ENCODE measurements at regions of chr21 and their contacts with region 1.

Region 1: DNA sequence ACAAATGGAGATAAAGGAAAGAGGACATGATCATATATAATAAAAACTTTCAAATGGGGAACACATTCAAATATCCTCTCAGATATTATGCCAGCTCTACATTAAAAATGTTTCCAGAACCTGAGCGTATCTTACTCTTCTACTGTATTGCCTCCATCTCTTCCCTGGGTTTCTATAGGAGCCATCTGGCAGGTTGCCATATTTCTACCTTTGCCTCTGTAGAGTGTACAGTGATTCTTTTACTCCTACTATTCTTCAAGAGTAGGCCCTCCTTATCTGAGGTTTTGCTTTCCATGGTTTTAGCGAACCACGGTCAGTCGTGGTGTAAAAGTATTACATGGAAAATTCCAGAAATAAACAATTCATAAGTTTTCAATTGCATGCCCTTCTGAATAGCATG is 259.5 kb downstream of the GRIK1 start:
- DNase-seq: no peak
- ATAC-seq: no peak
- H3K4me3 ChIP-seq: no peak overlapping the region
- H3K27ac ChIP-seq: no peak overlapping the region
- H3K4me1 ChIP-seq: no peaks in the 10 kb centered on the region
- H3K27me3 ChIP-seq: no peaks in the 10 kb centered on the region
- CTCF ChIP-seq: no peak

Region 2: DNA sequence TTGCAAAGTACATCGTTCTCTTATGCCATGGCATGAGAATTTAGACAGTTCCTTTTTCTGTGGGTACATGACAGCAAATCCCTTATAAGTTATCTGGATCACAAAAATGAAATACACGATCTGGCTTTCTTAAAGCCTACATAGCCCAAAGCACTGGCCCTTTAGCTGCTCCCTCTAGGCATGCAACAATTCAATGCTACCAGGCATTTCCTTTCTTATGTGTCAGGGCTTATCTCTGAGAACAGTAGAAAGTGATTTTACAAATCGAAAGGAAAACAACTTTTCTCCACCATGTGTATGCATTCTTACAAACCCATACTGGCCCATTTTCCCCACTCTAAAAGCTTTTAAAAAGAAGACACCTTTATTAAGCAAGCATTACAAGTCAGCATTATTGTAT is 119.8 kb after region 1 on chr21:
- intact Hi-C with region 1: loop called in 1 of 10 experiments (anchors 5 kb)
- DNase-seq: no peak
- ATAC-seq: no peak
- H3K4me3 ChIP-seq: no peak overlapping the region
- H3K27ac ChIP-seq: no peak overlapping the region
- H3K4me1 ChIP-seq: no peaks in the 10 kb centered on the region
- H3K27me3 ChIP-seq: peaks cover 0 to 9% (median 0%) of the 10 kb centered on the region in 7 donors
- CTCF ChIP-seq: no peak

Measured in heart right ventricle (tissue), 16 donors.